ENCODE measurements at regions of chr12 and their contacts with region 1.

Region 1: DNA sequence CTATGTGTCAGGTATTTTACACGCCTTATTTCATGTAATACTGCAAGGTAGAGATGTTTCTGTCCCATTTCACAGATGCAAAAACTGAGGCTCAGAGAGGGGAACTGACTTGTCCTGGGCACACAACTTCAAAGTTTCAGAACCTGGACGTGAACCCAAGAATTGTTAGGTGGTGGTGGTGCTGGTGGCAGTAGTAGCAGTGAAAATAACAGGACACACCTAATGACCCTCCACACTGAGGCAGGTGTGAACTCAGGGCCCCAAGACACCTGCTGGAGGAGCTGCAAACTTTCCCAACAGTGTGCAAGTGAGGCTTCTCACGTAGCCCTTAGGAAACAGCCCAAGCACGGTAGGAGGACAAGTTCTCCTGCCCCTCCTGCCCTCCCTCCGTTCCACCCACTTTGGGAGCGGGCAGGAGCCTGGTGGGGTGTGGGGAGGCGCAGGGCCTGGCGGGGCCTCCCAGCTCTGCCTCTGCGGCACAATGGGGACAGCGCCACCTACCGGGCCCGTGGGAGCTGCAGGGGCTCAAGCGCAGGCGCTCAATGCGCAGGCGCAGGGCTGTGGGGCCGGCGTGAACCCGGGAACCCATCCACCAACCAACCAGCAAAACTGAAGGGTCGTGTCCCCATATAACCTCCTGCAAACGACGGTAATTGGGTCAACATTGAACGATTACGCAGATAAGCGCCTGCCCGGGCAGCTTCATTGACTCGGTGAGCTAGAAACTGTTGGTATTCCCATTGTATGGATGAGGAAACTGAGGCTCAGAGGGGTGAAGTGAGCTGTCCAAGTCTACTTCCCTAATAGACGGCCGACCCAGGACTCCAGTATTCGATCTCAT is 12.0 kb upstream of the TRPV4 start:
- DNase-seq: peak; percentile 96
- CTCF ChIP-seq: peak; percentile 99

Region 2: DNA sequence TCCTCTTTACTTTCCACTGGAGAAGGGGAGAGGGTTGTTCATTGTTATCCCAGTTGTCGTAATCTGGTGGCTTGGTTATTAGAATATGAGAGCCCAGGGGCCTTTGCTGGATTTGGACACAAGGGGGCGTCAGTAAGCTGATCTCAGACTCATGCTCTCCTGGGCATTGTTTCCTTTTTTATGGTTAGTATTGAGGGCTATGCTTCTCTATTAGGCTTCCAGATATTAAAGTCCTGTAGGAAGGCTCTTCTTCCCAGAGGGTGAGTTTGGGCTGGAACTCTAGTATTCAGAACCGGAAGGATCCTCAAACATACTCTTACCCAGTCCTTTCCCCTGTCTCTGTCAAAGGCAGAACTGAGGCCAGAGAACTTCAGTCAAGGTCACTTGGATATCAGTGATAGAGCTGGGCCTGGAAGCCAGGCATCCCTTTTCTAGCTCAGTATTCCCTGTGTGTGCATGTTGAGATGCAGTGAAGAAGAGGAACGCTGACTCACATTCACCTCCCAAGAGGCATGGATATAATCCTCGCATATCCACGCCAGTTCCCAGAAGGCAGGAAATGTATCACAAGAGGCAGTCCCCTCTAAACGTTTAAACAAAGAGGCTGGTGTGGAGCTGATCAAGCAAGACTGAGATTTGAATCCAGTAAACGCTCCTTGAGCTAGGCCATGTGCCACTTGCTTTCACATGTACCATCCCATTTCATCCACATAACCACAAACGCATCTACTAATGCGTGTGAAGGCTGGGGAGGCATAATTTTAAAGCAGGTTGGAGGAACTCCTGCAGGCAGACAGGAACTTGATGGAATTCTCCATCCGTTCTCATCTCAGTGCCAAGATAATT is 326.2 kb before region 1 on chr12:
- CTCF ChIA-PET with region 1: interaction called, 13 read pairs
- POLR2A ChIA-PET with region 1: no interaction called
- DNase-seq: peak; percentile 64
- CTCF ChIP-seq: peak; percentile 64

Region 3: DNA sequence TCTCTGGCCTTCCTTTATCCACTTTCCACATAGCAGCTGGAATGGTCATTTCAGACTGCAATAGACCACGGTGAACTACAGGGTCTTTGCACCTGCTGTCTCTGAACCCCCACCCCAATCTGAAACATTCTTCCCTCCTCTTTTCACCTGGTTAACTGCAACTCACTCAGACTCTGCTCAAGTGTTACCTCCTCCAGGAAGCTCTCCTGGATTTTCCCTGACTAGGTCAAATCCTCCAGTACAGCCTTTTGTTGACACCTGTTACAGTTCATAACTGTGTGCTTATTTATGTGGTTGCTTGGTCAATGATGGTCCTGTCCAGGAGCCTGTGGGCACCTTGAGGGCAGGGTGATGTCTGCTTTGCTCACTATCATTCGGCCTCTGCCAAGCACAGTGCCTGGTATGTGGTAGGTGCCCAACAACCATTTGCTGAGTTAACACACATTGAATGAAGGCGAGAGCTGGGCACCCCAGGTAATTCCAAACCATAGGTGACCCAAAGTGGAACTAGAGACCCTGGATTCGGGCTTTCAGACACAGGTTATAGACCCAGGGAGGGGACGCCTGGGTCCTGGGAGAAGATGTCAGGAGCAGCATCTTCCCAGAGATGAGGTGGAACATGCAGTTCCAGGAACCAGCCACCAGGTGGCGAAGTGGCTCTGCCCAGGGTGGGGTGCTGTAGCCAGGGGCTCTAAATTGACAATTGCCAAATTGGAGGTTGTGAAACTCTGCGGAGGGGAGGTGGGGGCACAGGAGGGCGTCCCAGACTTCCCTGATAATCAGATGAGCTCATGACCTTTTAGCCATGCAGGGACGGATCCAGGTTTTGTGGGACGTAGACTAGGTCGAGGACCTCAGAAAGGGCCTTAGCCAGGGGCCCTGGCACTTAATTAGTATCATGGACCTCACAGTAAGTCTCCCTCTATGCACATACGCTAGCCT is 40.1 kb before region 1 on chr12:
- CTCF ChIA-PET with region 1: interaction called, 44 read pairs
- POLR2A ChIA-PET with region 1: no interaction called
- DNase-seq: peak; percentile 87
- CTCF ChIP-seq: peak; percentile 92

Region 4: GRCh38 chr12:109833307-109834189 is 11.7 kb before region 1 on chr12 and contains the start of gene TRPV4:
- CTCF ChIA-PET with region 1: interaction called, 25 read pairs
- POLR2A ChIA-PET with region 1: no interaction called
- DNase-seq: no peak
- CTCF ChIP-seq: no peak

Region 5: GRCh38 chr12:109880016-109880931 is 35.1 kb after region 1 on chr12 and contains the start of gene GLTP:
- CTCF ChIA-PET with region 1: interaction called, 12 read pairs
- POLR2A ChIA-PET with region 1: no interaction called
- DNase-seq: peak; percentile 98
- CTCF ChIP-seq: peak; percentile 93